ENCODE measurements at regions of chr10 and their contacts with region 1.

Region 1: DNA sequence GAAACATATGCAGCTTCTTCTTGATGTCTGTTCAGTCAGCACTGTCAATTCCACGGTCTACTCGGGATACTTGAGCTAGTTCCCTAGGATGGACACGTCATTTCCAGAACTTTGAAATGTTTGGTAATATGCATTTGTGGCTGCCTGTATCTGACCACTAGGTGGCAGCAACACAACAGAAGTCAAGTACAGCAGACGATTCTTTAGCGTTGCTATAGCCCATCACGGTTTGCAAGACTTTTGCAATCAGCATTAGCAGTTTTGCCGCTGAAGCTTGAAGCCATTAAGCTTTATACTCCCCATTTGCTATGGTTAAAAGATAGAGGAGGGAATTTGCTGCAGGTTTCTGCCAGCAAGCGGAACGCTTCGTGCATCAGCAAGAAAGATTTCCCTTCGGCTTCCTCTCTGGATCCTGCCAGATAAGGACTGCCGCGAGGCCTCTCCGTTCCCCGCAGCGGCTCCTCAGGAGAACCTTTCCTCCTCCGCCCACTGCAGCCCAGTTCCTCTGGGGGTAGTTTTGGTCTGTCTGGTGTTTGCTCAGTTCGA is 63.5 kb downstream of the ABCC2 start:
- DNase-seq: peak; percentile 82
- ATAC-seq: peak; percentile 96
- H3K4me3 Mint-ChIP-seq: peak overlapping the region; percentile 1
- H3K27ac Mint-ChIP-seq: no peak overlapping the region
- H3K4me1 Mint-ChIP-seq: peaks cover 9% of the 10 kb centered on the region
- H3K27me3 Mint-ChIP-seq: no peaks in the 10 kb centered on the region

Region 2: GRCh38 chr10:99698504-99699080 is 147.3 kb before region 1 on chr10:
- CTCF ChIA-PET with region 1: no interaction called
- DNase-seq: no peak
- ATAC-seq: no peak
- H3K4me3 Mint-ChIP-seq: no peak overlapping the region
- H3K27ac Mint-ChIP-seq: no peak overlapping the region
- H3K4me1 Mint-ChIP-seq: no peaks in the 10 kb centered on the region
- H3K27me3 Mint-ChIP-seq: no peaks in the 10 kb centered on the region

Region 3: GRCh38 chr10:99870123-99870730 is 24.3 kb after region 1 on chr10:
- CTCF ChIA-PET with region 1: interaction called, 12 read pairs
- DNase-seq: peak; percentile 66
- ATAC-seq: peak; percentile 91
- H3K4me3 Mint-ChIP-seq: peak overlapping the region; percentile 55
- H3K27ac Mint-ChIP-seq: peak overlapping the region; percentile 48
- H3K4me1 Mint-ChIP-seq: peaks cover 28% of the 10 kb centered on the region
- H3K27me3 Mint-ChIP-seq: peaks cover 71% of the 10 kb centered on the region

Region 4: GRCh38 chr10:99966306-99966705 is 120.4 kb after region 1 on chr10:
- CTCF ChIA-PET with region 1: interaction called, 18 read pairs
- DNase-seq: no peak
- ATAC-seq: no peak
- H3K4me3 Mint-ChIP-seq: no peak overlapping the region
- H3K27ac Mint-ChIP-seq: no peak overlapping the region
- H3K4me1 Mint-ChIP-seq: peaks cover 5% of the 10 kb centered on the region
- H3K27me3 Mint-ChIP-seq: no peaks in the 10 kb centered on the region

Region 5: DNA sequence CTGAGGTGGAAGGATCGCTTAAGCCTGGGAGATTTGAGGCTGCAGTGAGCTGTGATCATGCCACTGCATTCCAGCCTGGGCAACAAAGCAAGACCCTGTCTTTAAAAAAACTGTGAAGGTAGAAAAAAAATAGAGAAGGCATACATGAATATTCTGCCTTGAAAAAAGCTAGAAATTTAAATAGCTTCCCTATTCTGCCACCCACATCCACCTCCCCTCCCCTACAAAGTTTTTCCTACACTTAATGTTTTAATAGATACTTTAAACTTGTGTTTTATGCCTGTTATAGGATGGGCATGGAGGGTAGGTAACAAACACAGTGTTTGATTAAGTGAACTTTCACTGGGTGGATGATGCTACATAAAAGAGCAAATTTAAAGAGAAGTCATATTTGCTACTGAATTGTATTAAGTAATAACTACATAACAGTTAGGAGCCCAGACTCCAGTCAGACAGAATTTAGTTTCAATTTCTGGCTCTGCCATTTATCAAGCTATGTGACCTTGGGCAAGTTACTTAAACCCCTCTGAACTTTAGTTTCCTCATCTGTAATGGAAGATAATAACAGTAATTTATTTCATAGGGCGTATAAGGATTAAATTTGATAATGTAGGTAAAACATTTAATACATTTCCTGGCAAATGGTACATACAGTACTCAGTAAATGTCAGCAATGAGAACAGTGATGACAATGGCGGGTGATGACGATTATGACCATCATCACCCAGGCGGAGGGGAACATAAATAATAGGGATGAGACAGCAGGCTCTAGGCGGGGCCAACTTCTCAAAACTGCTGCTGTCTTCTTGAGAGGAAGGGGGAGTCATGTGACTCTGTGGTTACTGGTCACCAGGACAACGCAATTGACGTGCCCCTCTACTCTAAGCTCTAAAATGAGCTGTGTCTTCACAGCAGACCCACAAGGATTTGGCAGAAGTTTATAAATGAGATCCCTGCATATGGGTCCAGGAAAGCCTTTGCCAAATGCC is 148.1 kb after region 1 on chr10:
- CTCF ChIA-PET with region 1: interaction called, 15 read pairs
- DNase-seq: peak; percentile 83
- ATAC-seq: peak; percentile 93
- H3K4me3 Mint-ChIP-seq: peak overlapping the region; percentile 21
- H3K27ac Mint-ChIP-seq: peak overlapping the region; percentile 67
- H3K4me1 Mint-ChIP-seq: peaks cover 17% of the 10 kb centered on the region
- H3K27me3 Mint-ChIP-seq: no peaks in the 10 kb centered on the region

Region 6: GRCh38 chr10:100046021-100046486 is 200.1 kb after region 1 on chr10:
- CTCF ChIA-PET with region 1: interaction called, 132 read pairs
- DNase-seq: peak; percentile 85
- ATAC-seq: peak; percentile 78
- H3K4me3 Mint-ChIP-seq: no peak overlapping the region
- H3K27ac Mint-ChIP-seq: no peak overlapping the region
- H3K4me1 Mint-ChIP-seq: no peaks in the 10 kb centered on the region
- H3K27me3 Mint-ChIP-seq: peaks cover 7% of the 10 kb centered on the region

Region 7: GRCh38 chr10:100053686-100054460 is 208.0 kb after region 1 on chr10:
- CTCF ChIA-PET with region 1: interaction called, 132 read pairs
- DNase-seq: no peak
- ATAC-seq: no peak
- H3K4me3 Mint-ChIP-seq: no peak overlapping the region
- H3K27ac Mint-ChIP-seq: no peak overlapping the region
- H3K4me1 Mint-ChIP-seq: no peaks in the 10 kb centered on the region
- H3K27me3 Mint-ChIP-seq: peaks cover 26% of the 10 kb centered on the region

Region 8: GRCh38 chr10:100076750-100077149 is 230.8 kb after region 1 on chr10:
- CTCF ChIA-PET with region 1: no interaction called
- DNase-seq: no peak
- ATAC-seq: no peak
- H3K4me3 Mint-ChIP-seq: no peak overlapping the region
- H3K27ac Mint-ChIP-seq: no peak overlapping the region
- H3K4me1 Mint-ChIP-seq: no peaks in the 10 kb centered on the region
- H3K27me3 Mint-ChIP-seq: peaks cover 32% of the 10 kb centered on the region